Activated CD4-positive, alpha-beta memory T cell treated with anti-CD3 and anti-CD28 coated beads for 36 hours (primary cell): ENCODE measurements at regions of chr5 and their contacts with region 1.

Region 1: GRCh38 chr5:54944364-54944763 is 41.0 kb downstream of the ESM1 start:
- DNase-seq: peak; percentile 15
- H3K4me3 Mint-ChIP-seq: no peak overlapping the region
- H3K27ac Mint-ChIP-seq: no peak overlapping the region
- H3K4me1 Mint-ChIP-seq: no peaks in the 10 kb centered on the region
- H3K27me3 Mint-ChIP-seq: no peaks in the 10 kb centered on the region

Region 2: DNA sequence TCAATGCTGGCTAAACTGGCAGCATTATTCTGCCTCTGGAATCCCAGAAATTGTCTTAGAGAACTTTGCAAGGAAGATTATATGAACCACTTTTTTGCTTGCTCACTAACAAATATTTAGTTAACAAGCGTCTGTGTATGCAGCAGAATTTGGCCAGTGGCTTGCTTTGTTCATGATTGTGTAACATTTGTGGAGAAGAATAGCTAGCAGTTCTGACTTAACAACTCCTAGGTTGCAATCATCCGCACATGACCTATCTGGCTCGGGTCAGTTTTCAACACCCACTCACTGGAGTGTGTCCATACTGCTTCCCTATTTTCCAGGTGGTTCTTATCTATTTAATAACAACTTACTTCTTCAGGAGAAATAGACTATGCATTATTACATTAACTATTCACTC is 328.3 kb before region 1 on chr5:
- CTCF ChIA-PET with region 1: no interaction called
- POLR2A ChIA-PET with region 1: no interaction called
- intact Hi-C with region 1: no loop called
- DNase-seq: no peak
- H3K4me3 Mint-ChIP-seq: no peak overlapping the region
- H3K27ac Mint-ChIP-seq: no peak overlapping the region
- H3K4me1 Mint-ChIP-seq: peaks cover 6% of the 10 kb centered on the region
- H3K27me3 Mint-ChIP-seq: no peaks in the 10 kb centered on the region

Region 3: GRCh38 chr5:54959673-54960418 is 15.5 kb after region 1 on chr5:
- CTCF ChIA-PET with region 1: interaction called, 38 read pairs
- POLR2A ChIA-PET with region 1: no interaction called
- intact Hi-C with region 1: no loop called
- DNase-seq: peak; percentile 60
- H3K4me3 Mint-ChIP-seq: no peak overlapping the region
- H3K27ac Mint-ChIP-seq: no peak overlapping the region
- H3K4me1 Mint-ChIP-seq: peaks cover 6% of the 10 kb centered on the region
- H3K27me3 Mint-ChIP-seq: peaks cover 2% of the 10 kb centered on the region

Region 4: GRCh38 chr5:54985301-54986268 is 41.2 kb after region 1 on chr5 and contains the start of gene ESM1:
- CTCF ChIA-PET with region 1: interaction called, 14 read pairs
- POLR2A ChIA-PET with region 1: no interaction called
- intact Hi-C with region 1: no loop called
- DNase-seq: no peak
- H3K4me3 Mint-ChIP-seq: no peak within 1 kb of the TSS
- H3K27ac Mint-ChIP-seq: no peak within 1 kb of the TSS
- H3K4me1 Mint-ChIP-seq: peaks cover 40% of the 10 kb centered on the region
- H3K27me3 Mint-ChIP-seq: no peaks in the 10 kb centered on the region
- total RNA-seq, gene ESM1: 0.45 to 0.56 TPM

Region 5: DNA sequence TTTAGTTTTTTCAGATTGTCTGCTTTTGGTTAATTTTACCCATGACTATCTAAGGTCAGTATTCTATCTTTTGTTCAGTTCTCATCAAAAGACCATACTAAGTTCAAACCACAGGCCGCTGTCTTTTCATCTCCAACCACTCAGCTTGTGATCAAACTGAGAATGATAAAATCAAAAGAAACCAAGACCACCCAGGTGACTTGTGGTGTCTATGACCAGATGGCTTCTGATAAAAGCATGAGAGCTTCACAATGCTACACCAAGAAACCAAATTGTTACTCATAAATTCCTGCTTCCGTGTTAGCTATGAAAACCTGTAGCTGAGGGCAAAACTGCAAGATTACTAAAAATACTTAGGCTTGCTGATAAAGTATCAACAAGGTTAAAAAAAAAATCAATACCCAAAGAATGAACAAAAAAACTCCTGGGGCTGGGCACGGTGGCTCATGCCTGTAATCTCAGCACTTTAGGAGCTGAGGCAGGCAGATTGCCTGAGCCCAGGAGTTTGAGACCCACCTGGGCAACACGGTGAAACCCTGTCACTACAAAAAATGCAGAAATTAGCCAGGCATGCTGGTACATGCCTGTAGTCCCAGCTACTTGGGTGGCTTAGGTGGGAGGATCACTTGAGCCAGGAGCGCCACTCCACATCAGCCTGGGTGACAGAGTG is 189.8 kb after region 1 on chr5:
- CTCF ChIA-PET with region 1: interaction called, 42 read pairs
- POLR2A ChIA-PET with region 1: no interaction called
- intact Hi-C with region 1: no loop called
- DNase-seq: peak; percentile 16
- H3K4me3 Mint-ChIP-seq: no peak overlapping the region
- H3K27ac Mint-ChIP-seq: no peak overlapping the region
- H3K4me1 Mint-ChIP-seq: peaks cover 8% of the 10 kb centered on the region
- H3K27me3 Mint-ChIP-seq: peaks cover 6% of the 10 kb centered on the region

Region 6: DNA sequence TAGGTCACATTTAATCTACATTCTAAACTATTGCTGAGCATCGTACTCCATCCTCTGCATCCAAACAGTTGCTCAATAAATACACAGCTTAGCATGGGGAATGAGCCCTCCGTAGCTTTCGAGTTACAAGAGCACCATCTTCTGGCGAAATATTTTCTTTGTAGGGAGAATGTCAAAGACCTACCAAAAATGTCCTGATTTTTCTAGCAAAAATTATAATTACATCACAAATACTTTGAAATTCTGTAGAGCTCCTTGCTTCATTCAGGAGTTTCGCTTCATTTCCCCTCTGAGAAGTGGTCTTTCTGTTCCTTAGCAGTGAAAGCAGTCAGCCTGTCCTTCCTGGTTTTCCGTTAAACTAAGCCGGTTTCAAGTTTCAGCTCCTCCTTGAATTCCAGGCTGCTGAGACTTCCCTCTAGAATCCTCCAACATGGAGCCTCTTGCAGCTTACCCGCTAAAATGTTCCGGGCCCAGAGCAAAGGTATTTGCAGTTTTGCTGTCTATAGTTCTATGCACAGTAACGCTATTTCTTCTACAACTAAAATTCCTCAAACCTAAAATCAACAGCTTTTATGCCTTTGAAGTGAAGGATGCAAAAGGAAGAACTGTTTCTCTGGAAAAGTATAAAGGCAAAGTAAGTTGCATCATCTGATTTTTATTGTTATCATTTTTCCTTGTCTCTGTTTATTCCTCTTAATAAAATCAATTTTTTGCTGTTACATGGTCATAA is 215.6 kb after region 1 on chr5 and contains the start of gene GPX8:
- CTCF ChIA-PET with region 1: interaction called, 33 read pairs
- POLR2A ChIA-PET with region 1: no interaction called
- intact Hi-C with region 1: no loop called
- DNase-seq: no peak
- H3K4me3 Mint-ChIP-seq: no peak within 1 kb of the TSS
- H3K27ac Mint-ChIP-seq: no peak within 1 kb of the TSS
- H3K4me1 Mint-ChIP-seq: no peaks in the 10 kb centered on the region
- H3K27me3 Mint-ChIP-seq: peaks cover 16% of the 10 kb centered on the region
- total RNA-seq, gene GPX8: not detected